Tibial artery (tissue), 4 donors: ENCODE measurements at regions of chr17 and their contacts with region 1.

Region 1: GRCh38 chr17:68457539-68458259 is 403 bp upstream of the WIPI1 start:
- DNase-seq: peak; percentile 98 to 99
- H3K4me3 ChIP-seq: peak overlapping the region; percentile 73 to 95
- H3K27ac ChIP-seq: peak overlapping the region; percentile 93 to 95
- H3K4me1 ChIP-seq: peaks cover 0 to 31% (median 17%) of the 10 kb centered on the region in 4 donors
- H3K27me3 ChIP-seq: no peaks in the 10 kb centered on the region
- CTCF ChIP-seq: peak in 1 of 2 experiments; percentile 30

Region 2: GRCh38 chr17:68172461-68172954 is 285.2 kb before region 1 on chr17:
- intact Hi-C with region 1: loop called (anchors 10 kb)
- DNase-seq: peak; percentile 76 to 79
- H3K4me3 ChIP-seq: no peak overlapping the region
- H3K27ac ChIP-seq: no peak overlapping the region
- H3K4me1 ChIP-seq: no peaks in the 10 kb centered on the region
- H3K27me3 ChIP-seq: no peaks in the 10 kb centered on the region
- CTCF ChIP-seq: peak; percentile 92 to 97

Region 3: DNA sequence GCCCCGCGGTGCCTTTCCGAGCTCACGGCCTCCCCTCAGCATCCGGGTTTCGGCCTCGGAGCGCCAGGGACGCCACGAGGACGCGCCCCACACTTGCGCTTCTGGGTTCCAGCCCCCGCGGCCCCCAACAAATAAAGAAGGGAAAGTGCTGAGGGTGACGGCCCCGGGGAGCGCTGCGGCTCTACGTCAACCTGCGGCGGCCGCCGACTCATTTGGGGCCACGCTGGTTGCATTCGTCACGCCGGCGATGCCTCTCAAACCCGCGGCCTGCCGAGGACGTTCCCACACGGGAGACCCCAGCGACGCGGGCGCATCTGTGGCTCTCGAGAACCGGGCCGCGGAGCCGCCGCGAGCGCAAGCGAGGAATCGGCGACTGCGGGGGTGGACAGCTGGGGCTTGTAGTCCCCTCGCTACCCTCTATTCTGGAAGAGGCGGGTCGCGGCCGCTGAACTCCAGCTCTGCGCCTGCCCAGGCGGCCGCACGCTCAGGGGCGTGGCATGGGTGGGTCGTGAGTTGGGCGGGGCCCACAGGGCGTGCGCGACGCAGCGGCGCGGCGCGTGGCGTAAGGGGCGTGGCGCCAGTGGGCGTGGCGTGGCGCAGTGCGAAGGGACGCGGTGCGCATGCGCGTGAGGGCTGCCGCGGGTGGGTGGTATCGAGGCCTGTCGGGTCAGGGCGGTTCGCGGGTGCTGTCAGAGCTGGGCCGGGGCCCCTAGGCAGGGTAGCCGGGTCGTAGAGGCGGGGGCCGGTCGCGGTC is 210.1 kb before region 1 on chr17 and contains the start of gene AMZ2:
- intact Hi-C with region 1: loop called (anchors 10 kb)
- DNase-seq: peak; percentile 89 to 95
- H3K4me3 ChIP-seq: peak within 1 kb of the TSS; percentile 93 to 99
- H3K27ac ChIP-seq: peak within 1 kb of the TSS; percentile 94 to 99
- H3K4me1 ChIP-seq: peaks cover 0 to 15% (median 9%) of the 10 kb centered on the region in 4 donors
- H3K27me3 ChIP-seq: no peaks in the 10 kb centered on the region
- CTCF ChIP-seq: no peak

Region 4: GRCh38 chr17:68512247-68512982 is 54.7 kb after region 1 on chr17 and contains the start of gene PRKAR1A:
- intact Hi-C with region 1: loop called (anchors 5 kb)
- DNase-seq: peak; percentile 90 to 95
- H3K4me3 ChIP-seq: peak within 1 kb of the TSS; percentile 77 to 81
- H3K27ac ChIP-seq: peak within 1 kb of the TSS; percentile 94 to 97
- H3K4me1 ChIP-seq: peaks cover 0 to 38% (median 20%) of the 10 kb centered on the region in 4 donors
- H3K27me3 ChIP-seq: no peaks in the 10 kb centered on the region
- CTCF ChIP-seq: peak in 1 of 2 experiments; percentile 28

Region 5: GRCh38 chr17:68556556-68556955 is 98.9 kb after region 1 on chr17:
- intact Hi-C with region 1: no loop called
- DNase-seq: no peak
- H3K4me3 ChIP-seq: no peak overlapping the region
- H3K27ac ChIP-seq: no peak overlapping the region
- H3K4me1 ChIP-seq: no peaks in the 10 kb centered on the region
- H3K27me3 ChIP-seq: no peaks in the 10 kb centered on the region
- CTCF ChIP-seq: no peak

Region 6: GRCh38 chr17:68759343-68760132 is 301.8 kb after region 1 on chr17:
- intact Hi-C with region 1: loop called (anchors 10 kb)
- DNase-seq: peak; percentile 92 to 95
- H3K4me3 ChIP-seq: peak overlapping the region; percentile 42 to 50
- H3K27ac ChIP-seq: peak overlapping the region; percentile 67 to 69
- H3K4me1 ChIP-seq: peaks cover 0 to 8% (median 6%) of the 10 kb centered on the region in 4 donors
- H3K27me3 ChIP-seq: no peaks in the 10 kb centered on the region
- CTCF ChIP-seq: peak; percentile 90